Heart left ventricle (tissue), 16 donors: ENCODE measurements at regions of chr14 and their contacts with region 1.

Region 1: DNA sequence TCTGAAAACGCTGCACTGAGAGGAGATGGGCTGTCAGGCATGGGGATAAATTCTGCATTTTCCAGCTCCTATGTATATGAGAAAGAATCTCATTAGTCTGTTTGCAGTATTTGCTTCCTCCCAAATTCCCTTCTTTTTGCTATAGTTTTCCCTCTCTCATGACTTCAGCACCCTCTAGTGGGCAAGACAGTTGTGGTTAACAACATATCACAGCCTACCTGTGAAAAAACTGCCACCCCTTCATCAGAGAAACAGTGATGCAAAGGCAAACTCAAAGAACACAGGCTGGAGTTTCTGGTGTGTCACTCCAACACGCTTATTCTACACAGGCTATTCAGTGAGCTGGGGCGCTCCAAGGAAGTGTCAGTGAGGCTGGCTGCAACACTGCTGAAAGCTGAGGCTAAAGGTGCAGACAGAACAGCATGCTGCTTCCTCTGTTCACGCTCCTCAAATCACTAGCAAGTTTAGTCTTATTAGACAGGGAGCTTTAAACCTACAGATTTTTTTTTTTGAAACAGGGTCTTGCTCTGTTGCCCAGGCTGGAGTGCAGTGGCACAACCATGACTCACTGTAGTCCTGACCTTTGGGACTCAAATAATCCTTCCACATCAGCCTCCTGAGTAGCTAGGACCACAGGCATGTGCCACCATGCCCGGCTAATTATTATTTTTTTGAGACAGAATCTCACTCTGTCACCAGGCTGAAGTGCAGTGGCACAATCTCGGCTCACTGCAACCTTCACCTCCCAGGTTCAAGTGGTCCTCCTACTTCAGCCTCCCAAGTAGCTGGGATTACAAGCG is 19.3 kb downstream of the ZC2HC1C start:
- DNase-seq: peak in 2 of 5 donors; percentile 35 to 39
- ATAC-seq: peak; percentile 36 to 71 (median 71)
- H3K4me3 ChIP-seq: no peak overlapping the region
- H3K27ac ChIP-seq: no peak overlapping the region
- H3K4me1 ChIP-seq: no peaks in the 10 kb centered on the region
- H3K27me3 ChIP-seq: no peaks in the 10 kb centered on the region
- CTCF ChIP-seq: peak; percentile 67 to 87 (median 78)
- POLR2A ChIP-seq: no peak

Region 2: DNA sequence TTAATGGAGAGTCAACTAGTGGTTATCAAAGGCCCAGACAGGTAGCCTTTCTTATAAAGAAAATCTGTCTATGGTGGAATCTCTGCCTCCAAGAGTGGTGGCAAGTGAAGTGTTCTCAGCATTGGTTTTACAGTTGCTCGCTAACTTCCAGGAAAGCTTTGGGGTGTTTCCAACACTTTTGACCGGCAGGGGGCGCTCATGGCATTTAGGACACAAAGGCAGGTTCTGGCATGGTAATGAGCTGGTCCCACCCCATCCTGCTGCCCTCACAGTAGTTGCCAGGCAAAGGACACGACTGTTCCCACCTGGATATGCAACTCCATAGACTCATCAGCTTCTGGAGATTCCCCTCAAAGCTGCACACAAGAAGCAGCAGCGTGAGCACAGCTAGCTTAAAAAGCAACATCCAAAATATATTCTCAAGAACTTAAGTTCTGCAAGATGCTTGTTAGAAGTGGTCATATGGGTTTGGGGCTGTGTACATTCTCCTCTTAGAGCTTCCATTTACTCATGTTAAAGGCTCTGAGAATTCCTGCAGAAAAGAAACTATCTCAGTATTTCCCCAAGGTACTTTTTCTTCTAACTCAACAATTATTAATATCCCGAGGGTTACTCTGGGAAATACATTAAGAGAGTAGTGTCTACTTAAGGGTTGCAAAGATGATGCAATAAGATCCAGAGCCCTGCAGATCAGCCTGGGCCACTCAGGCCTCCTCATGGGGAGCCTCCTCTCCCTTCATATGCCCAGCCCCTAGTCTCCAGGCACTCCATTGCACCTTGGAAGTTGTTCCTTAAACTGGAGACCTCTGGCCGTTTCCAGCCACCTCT is 227.7 kb before region 1 on chr14:
- intact Hi-C with region 1: loop called in 9 of 10 experiments (anchors 1 to 5 kb)
- DNase-seq: peak; percentile 85 to 93 (median 91)
- ATAC-seq: peak; percentile 32 to 85 (median 83)
- H3K4me3 ChIP-seq: no peak overlapping the region
- H3K27ac ChIP-seq: no peak overlapping the region
- H3K4me1 ChIP-seq: peaks cover 0 to 20% (median 5%) of the 10 kb centered on the region in 12 donors
- H3K27me3 ChIP-seq: no peaks in the 10 kb centered on the region
- CTCF ChIP-seq: peak; percentile 80 to 98 (median 90)
- POLR2A ChIP-seq: no peak

Region 3: DNA sequence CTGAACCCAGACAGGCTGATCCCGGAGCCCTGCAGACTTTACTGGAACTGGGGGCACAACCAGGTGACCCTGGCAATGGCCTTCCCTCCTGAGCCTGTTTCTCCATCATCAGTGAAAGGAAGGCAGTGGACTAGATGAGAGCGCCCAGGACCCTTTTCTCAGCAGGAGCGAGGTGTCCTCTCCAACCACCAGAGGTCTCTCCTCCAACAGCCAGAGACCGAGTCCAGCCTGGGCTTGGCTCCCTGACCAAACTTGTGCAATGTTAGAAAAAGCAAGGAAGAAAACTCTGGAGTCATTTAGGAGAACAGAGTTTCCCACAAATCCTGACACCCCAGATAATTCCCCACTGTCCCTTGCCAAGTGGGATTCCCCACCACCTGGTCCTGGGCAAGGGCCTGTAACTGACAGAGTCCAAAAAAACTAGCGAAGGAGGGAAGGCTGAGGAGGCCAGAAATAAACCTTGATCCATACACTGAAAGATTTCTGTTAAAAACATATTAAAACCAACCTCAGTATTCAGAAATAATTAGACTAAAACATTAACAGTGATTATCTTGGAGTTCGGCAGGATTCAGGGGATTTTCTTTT is 174.7 kb before region 1 on chr14:
- intact Hi-C with region 1: loop called (anchors 1 to 5 kb)
- DNase-seq: peak in 4 of 5 donors; percentile 75 to 78 (median 76)
- ATAC-seq: peak; percentile 44 to 68 (median 60)
- H3K4me3 ChIP-seq: no peak overlapping the region
- H3K27ac ChIP-seq: peak overlapping the region in 8 of 12 donors; percentile 23 to 70 (median 33)
- H3K4me1 ChIP-seq: peaks cover 0 to 55% (median 40%) of the 10 kb centered on the region in 12 donors
- H3K27me3 ChIP-seq: no peaks in the 10 kb centered on the region
- CTCF ChIP-seq: peak; percentile 64 to 87 (median 76)
- POLR2A ChIP-seq: no peak

Region 4: DNA sequence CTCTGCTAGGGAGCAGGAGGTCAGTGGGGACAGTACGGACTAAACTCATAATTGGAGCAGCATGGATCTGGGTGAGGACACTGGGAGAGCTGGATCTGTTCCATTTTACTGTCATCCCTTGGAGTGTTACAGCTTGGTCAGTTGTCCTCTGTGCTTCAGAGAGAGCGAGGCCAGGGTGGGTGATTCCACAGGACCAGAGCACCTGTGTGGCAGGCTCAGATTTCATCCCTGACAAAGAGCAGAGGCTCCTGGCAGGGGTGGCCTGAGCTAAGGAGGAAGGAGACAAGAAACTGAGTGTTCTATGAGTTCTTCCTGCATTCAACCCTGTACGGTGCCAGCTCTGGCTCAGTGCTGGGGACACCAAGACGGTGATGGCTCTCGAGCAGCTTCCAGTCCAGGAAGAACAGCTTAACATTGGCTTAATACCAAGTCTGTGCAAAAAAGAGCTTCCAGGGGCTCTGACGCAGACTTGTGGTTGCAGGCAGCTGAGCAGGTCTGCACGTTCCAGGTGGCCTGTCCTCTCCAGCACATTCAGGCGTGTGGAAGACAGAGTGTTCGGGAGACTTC is 125.0 kb before region 1 on chr14:
- intact Hi-C with region 1: no loop called
- DNase-seq: no peak
- ATAC-seq: peak; percentile 16 to 55 (median 44)
- H3K4me3 ChIP-seq: no peak overlapping the region
- H3K27ac ChIP-seq: no peak overlapping the region
- H3K4me1 ChIP-seq: peaks cover 0 to 35% (median 16%) of the 10 kb centered on the region in 12 donors
- H3K27me3 ChIP-seq: no peaks in the 10 kb centered on the region
- CTCF ChIP-seq: no peak
- POLR2A ChIP-seq: no peak

Region 5: GRCh38 chr14:75050852-75051554 is 37.8 kb before region 1 on chr14 and contains the start of gene MLH3:
- intact Hi-C with region 1: loop called in 1 of 10 experiments (anchors 5 kb)
- DNase-seq: peak; percentile 84 to 93 (median 89)
- ATAC-seq: peak; percentile 71 to 95 (median 92)
- H3K4me3 ChIP-seq: peak within 1 kb of the TSS; percentile 48 to 80 (median 62)
- H3K27ac ChIP-seq: peak within 1 kb of the TSS; percentile 67 to 93 (median 90)
- H3K4me1 ChIP-seq: peaks cover 0 to 39% (median 15%) of the 10 kb centered on the region in 12 donors
- H3K27me3 ChIP-seq: no peaks in the 10 kb centered on the region
- CTCF ChIP-seq: peak in 2 of 12 donors; percentile 12
- POLR2A ChIP-seq: peak in 1 of 2 donors; percentile 67
- total RNA-seq, gene MLH3: 11.6 to 23.9 (median 15.3) TPM

Region 6: DNA sequence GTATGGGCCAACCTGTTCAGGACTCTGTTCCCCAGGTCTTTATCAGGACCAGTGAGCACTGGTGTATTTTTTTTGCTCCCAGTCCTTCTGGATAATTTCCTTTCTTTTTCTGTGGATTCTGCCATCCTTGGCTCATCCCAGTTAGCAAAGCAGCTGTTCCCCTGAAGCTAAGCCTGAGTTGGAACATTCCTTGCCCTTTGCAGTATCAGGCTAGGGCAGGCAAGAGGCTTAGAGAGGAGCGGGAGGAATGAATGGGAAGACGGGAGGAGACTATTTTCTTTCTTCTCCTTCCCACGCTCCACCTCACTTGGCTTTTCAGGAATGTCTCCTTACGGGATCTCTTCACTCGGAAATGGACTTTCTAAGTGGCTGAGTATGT is 542.7 kb after region 1 on chr14:
- intact Hi-C with region 1: no loop called
- DNase-seq: no peak
- ATAC-seq: no peak
- H3K4me3 ChIP-seq: no peak overlapping the region
- H3K27ac ChIP-seq: no peak overlapping the region
- H3K4me1 ChIP-seq: peaks cover 0 to 7% (median 0%) of the 10 kb centered on the region in 12 donors
- H3K27me3 ChIP-seq: no peaks in the 10 kb centered on the region
- CTCF ChIP-seq: no peak
- POLR2A ChIP-seq: no peak